SK-N-SH (cell line): ENCODE measurements at regions of chr1 and their contacts with region 1.

Region 1: GRCh38 chr1:9196129-9197040 is 38.2 kb upstream of the H6PD start:
- DNase-seq: peak; percentile 81
- H3K4me3 ChIP-seq: no peak overlapping the region; a peak in 1 of 4 replicates
- H3K27ac ChIP-seq: no peak overlapping the region; a peak in 1 of 4 replicates
- H3K4me1 ChIP-seq: peaks cover 0 to 5% of the 10 kb centered on the region in 2 experiments; a peak in 1 of 4 replicates
- H3K27me3 ChIP-seq: no peaks in the 10 kb centered on the region
- CTCF ChIP-seq: peak; percentile 73
- EP300 ChIP-seq: no peak
- RAD21 ChIP-seq: peak; percentile 92

Region 2: DNA sequence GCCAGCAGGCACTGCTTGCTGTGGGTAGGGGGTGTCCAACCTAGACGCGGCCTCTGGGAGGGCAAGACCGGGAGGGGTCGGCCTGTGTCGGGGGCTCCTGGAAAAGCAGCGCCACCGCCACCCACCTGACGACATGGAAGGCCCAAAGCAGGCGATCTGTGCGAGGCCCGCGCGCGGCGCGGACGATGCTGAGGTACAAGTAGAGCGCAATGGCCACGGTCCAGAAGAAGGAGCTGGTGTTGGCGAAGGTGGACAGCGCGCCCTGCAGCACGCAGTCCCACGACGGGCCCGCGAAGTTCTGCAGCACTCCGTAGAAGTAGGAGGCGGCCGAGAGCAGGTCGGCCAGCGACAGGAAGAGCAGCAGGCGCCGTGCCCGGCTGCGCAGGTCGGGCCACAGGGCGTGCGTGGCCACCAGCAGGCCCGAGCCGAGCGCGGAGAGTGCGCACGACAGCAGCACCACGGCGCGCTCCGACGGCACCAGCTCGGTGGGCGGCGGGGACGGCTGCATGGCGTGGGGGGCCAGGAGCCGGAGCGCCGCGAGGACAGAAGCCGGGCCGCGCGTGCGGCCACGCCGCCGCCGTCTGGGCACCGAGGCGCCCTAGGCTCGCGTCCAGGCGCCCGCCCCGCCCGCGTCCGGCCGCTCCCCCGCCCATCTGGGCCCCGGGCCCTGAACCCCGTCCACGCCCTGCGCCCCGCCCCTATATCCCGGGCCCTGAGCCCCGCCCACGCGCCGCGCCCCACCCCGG is 67.7 kb before region 1 on chr1 and contains the start of gene GPR157:
- CTCF ChIA-PET with region 1: interaction called, 18 read pairs
- POLR2A ChIA-PET with region 1: no interaction called
- DNase-seq: no peak
- H3K4me3 ChIP-seq: peak within 1 kb of the TSS; percentile 57 to 59
- H3K27ac ChIP-seq: peak within 1 kb of the TSS in 1 of 2 experiments; percentile 5; a peak in 1 of 4 replicates
- H3K4me1 ChIP-seq: peaks cover 0 to 16% of the 10 kb centered on the region in 2 experiments; a peak in 1 of 4 replicates
- H3K27me3 ChIP-seq: no peaks in the 10 kb centered on the region
- CTCF ChIP-seq: no peak
- EP300 ChIP-seq: no peak
- RAD21 ChIP-seq: no peak
- polyA plus RNA-seq, gene GPR157: 1.8 and 2.1 TPM in 2 replicates

Region 3: GRCh38 chr1:9135073-9135836 is 61.1 kb before region 1 on chr1:
- CTCF ChIA-PET with region 1: interaction called, 43 read pairs
- POLR2A ChIA-PET with region 1: no interaction called
- DNase-seq: no peak
- H3K4me3 ChIP-seq: no peak overlapping the region
- H3K27ac ChIP-seq: no peak overlapping the region
- H3K4me1 ChIP-seq: no peaks in the 10 kb centered on the region
- H3K27me3 ChIP-seq: no peaks in the 10 kb centered on the region
- CTCF ChIP-seq: no peak
- EP300 ChIP-seq: no peak
- RAD21 ChIP-seq: no peak

Region 4: DNA sequence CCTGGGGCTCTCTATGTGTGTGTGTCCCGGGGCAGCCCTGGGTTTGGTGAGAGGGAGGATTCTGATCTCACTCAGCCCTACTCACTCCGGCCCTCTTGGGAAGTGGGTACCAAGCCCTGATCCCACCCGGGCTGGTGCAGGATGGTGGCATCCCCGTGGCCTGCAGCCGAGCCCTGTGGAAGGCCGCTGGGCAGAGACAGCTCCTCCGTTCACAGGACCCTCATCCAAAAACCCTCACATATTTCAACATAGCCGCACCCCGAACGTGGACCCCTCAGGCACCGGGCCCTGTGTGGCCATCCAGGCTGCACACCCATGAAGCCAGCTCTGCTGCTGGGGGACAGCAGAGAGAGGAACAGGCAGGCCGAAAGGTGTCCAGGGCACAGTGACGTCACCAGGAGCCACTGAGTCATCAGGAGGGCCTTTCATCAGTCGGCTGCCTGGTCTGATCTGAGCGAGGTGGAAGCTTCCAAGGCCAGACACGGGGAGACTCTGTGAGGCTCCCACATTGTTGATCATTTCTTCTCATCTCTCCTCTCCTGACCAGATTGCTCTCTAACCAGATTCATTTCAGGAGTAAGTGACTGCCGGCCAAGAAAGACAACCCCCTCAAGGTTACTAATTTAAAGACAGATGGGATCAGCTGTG is 51.2 kb before region 1 on chr1:
- CTCF ChIA-PET with region 1: interaction called, 43 read pairs
- POLR2A ChIA-PET with region 1: no interaction called
- DNase-seq: no peak
- H3K4me3 ChIP-seq: no peak overlapping the region
- H3K27ac ChIP-seq: no peak overlapping the region
- H3K4me1 ChIP-seq: no peaks in the 10 kb centered on the region
- H3K27me3 ChIP-seq: no peaks in the 10 kb centered on the region
- CTCF ChIP-seq: no peak
- EP300 ChIP-seq: no peak
- RAD21 ChIP-seq: no peak

Region 5: DNA sequence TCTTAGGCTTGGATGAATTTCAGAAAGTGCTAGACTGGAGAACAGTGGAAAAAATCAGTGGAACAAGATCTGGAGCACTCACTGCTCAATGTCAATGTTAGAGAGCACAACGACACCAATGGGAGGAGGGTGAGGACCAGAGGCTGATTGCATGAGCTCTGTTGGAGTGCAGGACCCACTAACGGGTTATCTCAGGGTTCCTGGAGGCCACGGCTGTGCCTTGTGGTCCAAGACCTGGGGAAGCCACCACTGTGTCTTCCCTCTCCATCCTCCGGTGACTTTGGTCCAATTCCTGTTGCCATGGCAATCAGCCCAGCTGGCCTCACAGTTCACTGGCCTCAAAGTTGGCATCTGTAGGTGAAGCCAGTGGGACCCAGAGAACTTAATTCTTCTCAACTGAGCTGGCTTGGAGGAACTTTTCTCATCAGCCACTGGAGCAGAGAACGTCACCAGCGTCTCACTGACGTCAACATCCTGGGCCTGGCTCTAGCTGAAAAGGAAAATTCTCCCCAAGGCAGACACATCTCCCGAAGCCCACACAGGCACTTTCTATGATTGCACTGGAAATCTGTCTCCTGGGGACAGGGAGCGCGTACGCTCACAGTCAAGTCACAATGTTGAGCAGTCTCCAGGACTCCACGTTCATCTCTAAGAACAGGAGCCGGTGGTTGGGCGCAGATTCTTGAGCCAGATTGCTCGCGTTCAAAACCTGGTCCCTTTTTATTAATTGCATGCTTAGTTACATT is 45.6 kb before region 1 on chr1:
- CTCF ChIA-PET with region 1: interaction called, 11 read pairs
- POLR2A ChIA-PET with region 1: no interaction called
- DNase-seq: no peak
- H3K4me3 ChIP-seq: no peak overlapping the region
- H3K27ac ChIP-seq: no peak overlapping the region
- H3K4me1 ChIP-seq: no peaks in the 10 kb centered on the region
- H3K27me3 ChIP-seq: no peaks in the 10 kb centered on the region
- CTCF ChIP-seq: no peak
- EP300 ChIP-seq: no peak
- RAD21 ChIP-seq: no peak

Region 6: GRCh38 chr1:9181176-9181906 is 15.0 kb before region 1 on chr1:
- CTCF ChIA-PET with region 1: interaction called, 27 read pairs
- POLR2A ChIA-PET with region 1: no interaction called
- DNase-seq: peak; percentile 86
- H3K4me3 ChIP-seq: peak overlapping the region; percentile 75 to 87
- H3K27ac ChIP-seq: peak overlapping the region; percentile 77 to 89
- H3K4me1 ChIP-seq: peaks cover 0 to 32% of the 10 kb centered on the region in 2 experiments; a peak in 1 of 4 replicates
- H3K27me3 ChIP-seq: no peaks in the 10 kb centered on the region
- CTCF ChIP-seq: peak; percentile 92
- EP300 ChIP-seq: no peak
- RAD21 ChIP-seq: peak; percentile 31; the same call in 1 of the 2 replicates

Region 7: DNA sequence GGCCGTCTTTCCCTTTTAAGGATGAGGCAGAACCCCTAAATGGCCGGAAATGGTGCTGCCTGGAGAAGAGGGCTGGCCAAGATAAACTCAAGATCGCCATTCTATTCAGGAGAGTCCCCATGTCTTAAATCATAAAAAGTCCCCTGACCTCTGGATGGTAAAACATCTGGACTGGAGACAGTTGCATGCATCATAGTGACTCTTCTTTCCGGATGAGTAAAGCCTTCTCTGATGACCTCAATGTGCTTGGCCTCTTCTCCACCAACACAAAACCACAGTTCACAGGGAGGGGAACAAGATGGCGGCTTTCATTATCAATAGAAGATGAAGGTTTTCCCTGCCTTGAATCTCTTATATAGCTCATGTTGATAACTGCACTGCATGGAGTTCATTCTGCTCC is 10.7 kb after region 1 on chr1:
- CTCF ChIA-PET with region 1: interaction called, 12 read pairs
- POLR2A ChIA-PET with region 1: no interaction called
- DNase-seq: no peak
- H3K4me3 ChIP-seq: no peak overlapping the region
- H3K27ac ChIP-seq: no peak overlapping the region
- H3K4me1 ChIP-seq: peaks cover 0 to 4% of the 10 kb centered on the region in 2 experiments; a peak in 1 of 4 replicates
- H3K27me3 ChIP-seq: no peaks in the 10 kb centered on the region; the same call in 1 of the 2 replicates
- CTCF ChIP-seq: no peak
- EP300 ChIP-seq: no peak
- RAD21 ChIP-seq: no peak

Region 8: DNA sequence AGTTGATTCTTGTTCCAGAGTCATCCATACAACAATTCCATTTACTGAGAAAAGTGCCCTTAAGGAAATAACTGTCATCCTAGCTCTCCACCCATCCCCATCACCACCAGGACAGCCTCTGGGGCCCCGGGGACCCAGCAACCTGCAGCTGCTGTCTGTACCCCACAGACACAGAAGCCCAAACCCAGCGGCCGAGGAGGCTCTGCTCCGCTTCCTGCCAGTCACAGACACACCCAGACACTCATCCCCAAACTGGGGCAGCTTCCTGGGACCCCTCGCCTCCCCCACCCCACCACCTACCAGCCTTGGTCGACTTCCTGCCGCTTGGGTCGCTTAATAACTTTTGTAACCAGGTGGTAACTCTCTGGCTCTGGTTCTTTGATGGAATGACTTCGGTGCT is 221.3 kb after region 1 on chr1:
- CTCF ChIA-PET with region 1: no interaction called
- POLR2A ChIA-PET with region 1: no interaction called
- DNase-seq: no peak
- H3K4me3 ChIP-seq: no peak overlapping the region
- H3K27ac ChIP-seq: no peak overlapping the region
- H3K4me1 ChIP-seq: peaks cover 0 to 3% of the 10 kb centered on the region in 2 experiments; a peak in 3 of 4 replicates
- H3K27me3 ChIP-seq: no peaks in the 10 kb centered on the region
- CTCF ChIP-seq: no peak
- EP300 ChIP-seq: no peak
- RAD21 ChIP-seq: no peak